CD8-positive, alpha-beta T cell (primary cell): ENCODE measurements at regions of chr5 and their contacts with region 1.

Region 1: GRCh38 chr5:143968011-143968878 is 156.3 kb downstream of the HMHB1 start:
- DNase-seq: peak in 2 of 9 experiments; percentile 27 to 52
- ATAC-seq: no peak
- H3K4me3 ChIP-seq: no peak overlapping the region
- H3K4me3 Mint-ChIP-seq: no peak overlapping the region
- H3K27ac ChIP-seq: no peak overlapping the region
- H3K27ac Mint-ChIP-seq: no peak overlapping the region
- H3K4me1 ChIP-seq: no peaks in the 10 kb centered on the region
- H3K4me1 Mint-ChIP-seq: no peaks in the 10 kb centered on the region
- H3K27me3 ChIP-seq: no peaks in the 10 kb centered on the region
- H3K27me3 Mint-ChIP-seq: peaks cover 8% of the 10 kb centered on the region
- CTCF ChIP-seq: no peak

Region 2: GRCh38 chr5:142922223-142922952 is 1045.9 kb before region 1 on chr5:
- CTCF ChIA-PET with region 1: no interaction called
- POLR2A ChIA-PET with region 1: no interaction called
- intact Hi-C with region 1: loop called in 1 of 2 experiments (anchors 5 kb)
- DNase-seq: peak in 2 of 9 experiments; percentile 50 to 67
- ATAC-seq: no peak
- H3K4me3 ChIP-seq: no peak overlapping the region
- H3K4me3 Mint-ChIP-seq: no peak overlapping the region
- H3K27ac ChIP-seq: peak overlapping the region in 1 of 2 experiments; percentile 21
- H3K27ac Mint-ChIP-seq: peak overlapping the region; percentile 37
- H3K4me1 ChIP-seq: peaks cover 7% of the 10 kb centered on the region
- H3K4me1 Mint-ChIP-seq: peaks cover 34% of the 10 kb centered on the region
- H3K27me3 ChIP-seq: no peaks in the 10 kb centered on the region
- H3K27me3 Mint-ChIP-seq: no peaks in the 10 kb centered on the region
- CTCF ChIP-seq: no peak

Region 3: GRCh38 chr5:143334903-143335302 is 633.3 kb before region 1 on chr5:
- CTCF ChIA-PET with region 1: no interaction called
- POLR2A ChIA-PET with region 1: no interaction called
- intact Hi-C with region 1: no loop called
- DNase-seq: no peak
- ATAC-seq: no peak
- H3K4me3 ChIP-seq: no peak overlapping the region
- H3K4me3 Mint-ChIP-seq: no peak overlapping the region
- H3K27ac ChIP-seq: no peak overlapping the region
- H3K27ac Mint-ChIP-seq: no peak overlapping the region
- H3K4me1 ChIP-seq: no peaks in the 10 kb centered on the region
- H3K4me1 Mint-ChIP-seq: peaks cover 42% of the 10 kb centered on the region
- H3K27me3 ChIP-seq: no peaks in the 10 kb centered on the region
- H3K27me3 Mint-ChIP-seq: no peaks in the 10 kb centered on the region
- CTCF ChIP-seq: no peak

Region 4: GRCh38 chr5:143896966-143897365 is 71.3 kb before region 1 on chr5:
- CTCF ChIA-PET with region 1: no interaction called
- POLR2A ChIA-PET with region 1: no interaction called
- intact Hi-C with region 1: loop called in 1 of 2 experiments (anchors 10 kb)
- DNase-seq: no peak
- ATAC-seq: no peak
- H3K4me3 ChIP-seq: no peak overlapping the region
- H3K4me3 Mint-ChIP-seq: no peak overlapping the region
- H3K27ac ChIP-seq: no peak overlapping the region
- H3K27ac Mint-ChIP-seq: no peak overlapping the region
- H3K4me1 ChIP-seq: peaks cover 23% of the 10 kb centered on the region
- H3K4me1 Mint-ChIP-seq: peaks cover 36% of the 10 kb centered on the region
- H3K27me3 ChIP-seq: no peaks in the 10 kb centered on the region
- H3K27me3 Mint-ChIP-seq: no peaks in the 10 kb centered on the region
- CTCF ChIP-seq: no peak

Region 5: DNA sequence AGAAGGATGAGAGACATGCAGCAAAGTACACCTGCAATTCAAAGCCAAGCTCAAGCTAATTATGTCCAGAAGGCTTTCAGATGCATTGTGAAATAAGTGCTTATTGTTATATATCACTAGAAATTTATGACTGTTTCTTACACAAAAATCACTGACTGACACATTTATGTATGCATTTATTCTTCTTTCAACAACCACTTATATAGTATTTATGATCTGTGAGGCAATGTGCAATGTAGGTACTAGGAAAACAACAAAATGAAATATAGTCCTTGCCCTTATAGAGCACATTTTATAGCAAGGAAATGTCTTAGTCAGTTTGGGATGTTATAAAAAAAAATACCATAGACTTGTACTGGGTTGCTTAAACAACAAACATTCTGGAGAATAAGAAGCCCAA is 34.6 kb after region 1 on chr5:
- CTCF ChIA-PET with region 1: no interaction called
- POLR2A ChIA-PET with region 1: interaction called, 4 read pairs
- intact Hi-C with region 1: loop called in 1 of 2 experiments (anchors 1 kb)
- DNase-seq: no peak
- ATAC-seq: no peak
- H3K4me3 ChIP-seq: no peak overlapping the region
- H3K4me3 Mint-ChIP-seq: no peak overlapping the region
- H3K27ac ChIP-seq: no peak overlapping the region
- H3K27ac Mint-ChIP-seq: no peak overlapping the region
- H3K4me1 ChIP-seq: no peaks in the 10 kb centered on the region
- H3K4me1 Mint-ChIP-seq: no peaks in the 10 kb centered on the region
- H3K27me3 ChIP-seq: no peaks in the 10 kb centered on the region
- H3K27me3 Mint-ChIP-seq: peaks cover 1% of the 10 kb centered on the region
- CTCF ChIP-seq: no peak